Activated T-helper 1 cell treated with anti-CD3 and anti-CD28 coated beads, Interleukin-12 subunit alpha, Interleukin-12 subunit beta, Interleukin-2, Interleukin-4 antibody, amounts not matched to agents 30 ng/mL and 10 ng/mL and 1 ng/mL, durations not matched to agents 14 hours and 24 hours and 36 hours (primary cell): ENCODE measurements at regions of chr9 and their contacts with region 1.

Region 1: DNA sequence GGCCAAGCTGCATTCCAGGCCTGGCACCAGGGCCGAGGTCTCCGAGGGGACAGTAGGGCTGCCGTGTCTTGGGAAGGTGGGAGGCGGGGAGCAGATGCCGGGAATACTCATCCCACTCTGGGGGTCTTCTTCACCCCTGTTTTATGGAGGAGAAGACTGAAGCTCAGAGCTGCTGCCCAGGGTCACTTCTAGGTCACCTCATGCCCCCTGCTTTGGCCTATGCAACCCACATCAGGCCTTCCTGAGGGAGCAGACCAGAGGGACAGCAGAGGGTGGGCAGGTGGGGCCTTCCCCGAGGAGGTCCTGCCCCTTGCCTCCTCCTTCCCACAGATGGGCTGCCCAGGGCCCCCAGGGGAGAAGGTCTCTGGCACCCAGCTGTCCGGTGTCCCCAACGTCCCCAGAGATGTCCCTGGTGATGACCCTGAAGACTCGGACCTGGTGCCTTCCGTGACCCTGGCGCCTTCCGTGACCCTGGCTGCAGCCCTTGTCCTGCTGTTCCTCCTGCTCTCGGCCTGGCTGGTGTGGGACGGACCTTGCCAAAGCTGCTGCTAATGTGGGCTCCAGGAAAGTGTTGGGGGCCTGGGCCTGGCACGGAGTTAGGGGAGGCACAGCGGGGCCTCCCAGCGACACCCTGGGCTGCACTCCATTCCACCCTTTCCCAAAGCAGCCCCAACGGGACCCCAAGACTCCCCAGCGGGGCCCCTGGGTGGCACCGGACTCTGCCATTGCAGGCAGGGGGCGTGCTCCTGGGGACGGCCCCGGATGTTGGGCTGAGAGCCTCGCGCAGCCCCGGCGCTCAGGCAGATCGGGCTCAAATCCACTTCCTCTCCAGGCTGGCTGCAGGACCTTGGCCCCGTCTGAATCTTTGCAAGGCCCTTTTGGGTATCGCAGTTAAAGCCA is 6.7 kb upstream of the SLC2A6 start:
- DNase-seq: no peak
- H3K4me3 Mint-ChIP-seq: no peak overlapping the region
- H3K27ac Mint-ChIP-seq: no peak overlapping the region
- H3K4me1 Mint-ChIP-seq: peaks cover 6% of the 10 kb centered on the region
- H3K27me3 Mint-ChIP-seq: peaks cover 11% of the 10 kb centered on the region

Region 2: GRCh38 chr9:132973713-132974112 is 511.9 kb before region 1 on chr9:
- intact Hi-C with region 1: loop called (anchors 1 kb)
- DNase-seq: no peak
- H3K4me3 Mint-ChIP-seq: no peak overlapping the region
- H3K27ac Mint-ChIP-seq: no peak overlapping the region
- H3K4me1 Mint-ChIP-seq: peaks cover 4% of the 10 kb centered on the region
- H3K27me3 Mint-ChIP-seq: peaks cover 20% of the 10 kb centered on the region

Region 3: DNA sequence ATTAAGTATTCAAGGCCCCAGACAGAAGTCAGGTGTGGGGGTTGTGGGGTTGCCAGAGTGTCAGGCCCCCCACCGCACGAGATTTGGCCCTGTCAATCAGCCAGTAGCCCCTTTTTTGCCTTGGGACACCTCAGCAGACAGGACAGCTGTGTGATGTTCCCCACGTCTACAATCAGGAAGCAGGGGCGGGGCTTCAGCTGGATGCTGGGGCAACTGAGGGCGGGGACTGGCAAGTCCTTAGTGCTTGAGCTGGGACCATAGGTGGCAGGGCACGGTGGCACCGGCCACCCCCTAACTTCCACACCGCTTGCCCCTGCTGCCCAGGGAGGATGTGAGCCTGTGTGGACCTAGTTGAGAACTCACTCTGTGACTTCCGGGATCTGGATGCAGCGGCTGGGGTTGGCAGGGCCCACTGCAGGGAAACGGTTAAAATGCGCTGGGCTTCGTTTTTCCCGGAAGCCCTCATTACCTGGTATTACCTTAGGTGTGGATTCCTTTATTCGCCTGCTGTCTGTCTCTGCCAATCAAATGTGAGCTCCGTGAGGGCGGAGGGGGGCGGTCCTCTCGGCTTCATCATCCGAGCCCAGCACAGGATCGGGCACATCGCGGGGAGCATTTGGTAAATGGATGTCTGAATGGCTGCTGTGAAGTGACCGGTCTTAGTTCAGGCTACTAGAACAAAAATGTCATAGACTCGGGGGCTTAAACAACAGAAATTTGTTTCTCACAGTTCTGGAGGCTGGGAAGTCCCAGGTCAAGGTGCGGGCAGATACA is 462.3 kb before region 1 on chr9:
- intact Hi-C with region 1: loop called (anchors 1 kb)
- DNase-seq: peak; percentile 46
- H3K4me3 Mint-ChIP-seq: peak overlapping the region; percentile 39
- H3K27ac Mint-ChIP-seq: no peak overlapping the region
- H3K4me1 Mint-ChIP-seq: peaks cover 33% of the 10 kb centered on the region
- H3K27me3 Mint-ChIP-seq: peaks cover 4% of the 10 kb centered on the region

Region 4: DNA sequence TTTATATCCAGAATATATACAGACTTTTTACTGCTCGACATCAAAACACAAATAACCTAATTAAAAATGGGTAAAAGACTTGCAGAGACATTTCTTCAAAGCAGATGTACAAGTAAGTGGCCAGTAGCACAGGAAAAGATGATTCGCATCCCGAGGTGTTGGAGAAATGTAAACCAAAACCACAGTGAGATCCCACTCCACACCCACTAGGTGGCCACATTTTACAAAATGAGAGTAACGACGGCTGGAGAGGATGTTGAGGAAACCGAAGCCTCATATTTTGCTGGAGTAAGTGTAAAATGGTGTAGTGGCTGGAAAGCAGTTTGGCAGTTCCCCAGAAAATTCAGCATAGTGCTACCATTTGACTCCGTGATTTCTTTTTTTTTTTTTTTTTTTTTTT is 300.6 kb before region 1 on chr9:
- intact Hi-C with region 1: loop called (anchors 1 kb)
- DNase-seq: peak; percentile 51
- H3K4me3 Mint-ChIP-seq: no peak overlapping the region
- H3K27ac Mint-ChIP-seq: peak overlapping the region; percentile 42
- H3K4me1 Mint-ChIP-seq: peaks cover 27% of the 10 kb centered on the region
- H3K27me3 Mint-ChIP-seq: peaks cover 40% of the 10 kb centered on the region

Region 5: DNA sequence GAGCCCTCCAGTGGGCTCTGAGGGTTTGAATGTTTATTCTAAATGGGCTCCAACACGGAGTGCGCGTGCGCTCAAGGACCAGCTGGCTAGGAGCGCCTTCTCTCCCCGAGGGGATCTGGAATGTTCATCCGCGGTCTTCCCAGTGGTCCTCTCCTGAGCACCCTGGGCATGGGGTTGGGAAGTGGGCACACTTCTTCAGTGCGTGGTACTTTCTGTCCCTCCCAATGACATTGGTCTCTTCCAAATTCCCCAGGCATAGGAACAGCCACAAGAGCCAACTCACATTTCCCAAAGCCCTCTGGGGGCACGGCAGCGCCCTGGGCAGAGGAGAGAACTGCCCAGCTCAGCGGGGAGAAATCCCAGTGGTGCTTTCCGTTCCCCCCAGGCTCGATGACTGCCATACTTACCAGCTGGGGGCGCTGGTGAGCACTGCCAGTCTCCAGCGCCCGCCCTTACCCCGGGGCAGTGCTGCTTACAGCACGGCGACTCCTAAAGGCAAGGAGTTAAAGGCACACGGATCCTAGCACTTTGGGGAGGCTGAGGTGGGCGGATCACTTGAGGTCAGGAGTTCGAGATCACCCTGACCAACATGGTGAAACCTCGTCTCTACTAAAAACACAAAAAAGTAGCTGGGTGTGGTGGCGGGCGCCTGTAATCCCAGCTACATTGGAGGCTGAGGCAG is 246.6 kb before region 1 on chr9:
- intact Hi-C with region 1: loop called (anchors 1 kb)
- DNase-seq: peak; percentile 61
- H3K4me3 Mint-ChIP-seq: peak overlapping the region; percentile 49
- H3K27ac Mint-ChIP-seq: no peak overlapping the region
- H3K4me1 Mint-ChIP-seq: peaks cover 14% of the 10 kb centered on the region
- H3K27me3 Mint-ChIP-seq: peaks cover 14% of the 10 kb centered on the region

Region 6: GRCh38 chr9:133347985-133348717 is 137.5 kb before region 1 on chr9 and contains the starts of genes MED22 and RPL7A:
- intact Hi-C with region 1: loop called (anchors 5 kb)
- DNase-seq: peak; percentile 90
- H3K4me3 Mint-ChIP-seq: peak within 1 kb of the TSS; percentile 93
- H3K27ac Mint-ChIP-seq: peak within 1 kb of the TSS; percentile 99
- H3K4me1 Mint-ChIP-seq: peaks cover 36% of the 10 kb centered on the region
- H3K27me3 Mint-ChIP-seq: peaks cover 2% of the 10 kb centered on the region
- total RNA-seq, gene MED22: 37.9 and 40.5 TPM in 2 replicates
- total RNA-seq, gene RPL7A: 2,401 and 2,463 TPM in 2 replicates

Region 7: DNA sequence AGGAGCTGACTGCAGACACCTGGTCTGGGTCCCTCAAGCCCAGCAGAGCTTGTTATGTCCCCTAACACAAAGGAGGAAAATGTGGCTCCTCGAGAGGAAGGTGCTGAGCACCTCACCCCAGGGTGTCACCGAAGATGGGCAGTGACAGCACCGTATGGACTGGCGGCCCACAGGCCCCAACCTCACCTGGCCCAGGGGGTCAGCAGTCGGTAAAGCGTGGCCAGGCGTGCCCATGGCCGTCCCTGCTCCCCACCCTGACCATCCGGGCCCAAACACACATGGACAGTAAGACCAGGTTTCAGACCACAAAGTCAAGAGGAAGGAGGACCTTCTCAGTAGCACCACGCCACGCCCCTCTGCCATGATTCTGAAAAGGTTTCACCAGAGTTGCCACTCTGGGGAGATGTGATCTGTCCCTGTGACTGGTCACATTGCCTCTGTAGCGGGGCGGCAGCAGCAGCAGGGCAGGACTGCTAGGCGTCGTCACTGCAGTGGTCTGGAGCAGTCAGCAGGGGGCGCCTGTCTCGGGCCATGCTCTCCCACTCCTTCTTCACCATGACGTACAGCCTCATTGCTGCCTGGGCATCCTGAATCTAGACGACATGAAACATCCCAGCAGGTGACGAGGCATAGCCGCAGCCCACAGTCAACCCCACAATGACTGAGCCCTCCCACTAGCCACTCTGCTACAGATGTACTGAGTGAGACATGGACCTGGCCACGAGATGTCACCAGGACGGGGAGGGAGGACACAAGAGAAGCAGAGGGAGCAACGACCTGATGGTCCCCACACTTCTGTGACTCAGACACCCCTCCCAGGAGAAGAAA is 78.9 kb before region 1 on chr9:
- intact Hi-C with region 1: loop called (anchors 1 kb)
- DNase-seq: peak; percentile 67
- H3K4me3 Mint-ChIP-seq: no peak overlapping the region
- H3K27ac Mint-ChIP-seq: peak overlapping the region; percentile 82
- H3K4me1 Mint-ChIP-seq: peaks cover 9% of the 10 kb centered on the region
- H3K27me3 Mint-ChIP-seq: no peaks in the 10 kb centered on the region